Left lung (tissue), 14 donors: ENCODE measurements at regions of chr1 and their contacts with region 1.

Region 1: GRCh38 chr1:150529017-150529416 is 13.5 kb downstream of the FALEC start:
- DNase-seq: peak in 2 of 4 donors; percentile 40 to 69
- ATAC-seq: peak; percentile 67
- H3K4me3 ChIP-seq: no peak overlapping the region
- H3K27ac ChIP-seq: no peak overlapping the region
- H3K4me1 ChIP-seq: peaks cover 0 to 6% of the 10 kb centered on the region in 2 donors
- H3K27me3 ChIP-seq: no peaks in the 10 kb centered on the region
- CTCF ChIP-seq: no peak

Region 2: GRCh38 chr1:150213170-150214098 is 315.6 kb before region 1 on chr1:
- intact Hi-C with region 1: no loop called
- DNase-seq: peak; percentile 86 to 97 (median 96)
- ATAC-seq: peak; percentile 99
- H3K4me3 ChIP-seq: peak overlapping the region; percentile 28 to 36
- H3K27ac ChIP-seq: peak overlapping the region; percentile 83 to 90
- H3K4me1 ChIP-seq: peaks cover 0 to 11% of the 10 kb centered on the region in 2 donors
- H3K27me3 ChIP-seq: no peaks in the 10 kb centered on the region
- CTCF ChIP-seq: no peak

Region 3: GRCh38 chr1:150477733-150478132 is 51.3 kb before region 1 on chr1:
- intact Hi-C with region 1: loop called in 1 of 2 experiments (anchors 10 kb)
- DNase-seq: no peak
- ATAC-seq: no peak
- H3K4me3 ChIP-seq: no peak overlapping the region
- H3K27ac ChIP-seq: no peak overlapping the region
- H3K4me1 ChIP-seq: peaks cover 0 to 5% of the 10 kb centered on the region in 2 donors
- H3K27me3 ChIP-seq: no peaks in the 10 kb centered on the region
- CTCF ChIP-seq: no peak